HEK293T (cell line): ENCODE measurements at regions of chr6 and their contacts with region 1.

Region 1: DNA sequence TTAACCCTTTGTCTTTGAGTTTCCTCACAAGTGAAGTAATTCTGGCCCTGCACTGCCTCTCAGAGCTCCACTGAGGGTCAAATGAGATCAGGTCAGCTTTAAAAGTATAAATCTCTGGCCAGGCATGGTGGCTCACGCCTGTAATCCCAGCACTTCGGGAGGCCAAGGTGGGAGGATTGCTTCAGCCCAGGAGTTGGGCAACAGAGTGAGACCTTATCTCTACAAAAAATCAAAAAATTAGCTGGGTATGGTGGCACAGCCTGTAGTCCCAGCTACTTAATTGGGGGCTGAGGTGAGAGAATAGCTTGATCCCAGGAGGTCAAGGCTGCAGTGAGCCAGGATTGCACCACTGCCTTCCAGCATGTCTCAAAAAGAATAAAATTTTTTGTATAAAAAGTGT is 141.2 kb downstream of the MTFR2 start:
- DNase-seq: no peak

Region 2: DNA sequence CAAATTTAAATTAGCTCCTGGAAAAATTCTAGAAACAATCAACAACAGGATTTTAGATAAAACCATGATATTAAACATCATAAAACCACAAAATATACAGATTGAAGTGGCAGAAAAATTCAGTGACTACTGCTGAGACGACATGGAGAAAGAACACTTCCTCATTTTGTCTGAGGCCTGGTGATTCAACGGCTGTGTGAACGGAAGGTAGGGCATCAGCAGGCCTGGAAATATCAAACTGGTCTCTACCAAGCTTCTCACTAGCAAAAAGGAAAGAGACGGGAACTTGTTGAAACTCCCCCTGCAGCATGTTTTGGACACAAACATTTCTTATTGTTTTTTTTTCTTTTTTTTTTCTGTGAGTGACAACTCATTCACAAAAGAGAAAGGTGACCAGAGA is 553.4 kb before region 1 on chr6:
- CTCF ChIA-PET with region 1: interaction called, 12 read pairs
- POLR2A ChIA-PET with region 1: no interaction called
- DNase-seq: no peak